Common myeloid progenitor, CD34-positive (primary cell): ENCODE measurements at regions of chr6 and their contacts with region 1.

Region 1: DNA sequence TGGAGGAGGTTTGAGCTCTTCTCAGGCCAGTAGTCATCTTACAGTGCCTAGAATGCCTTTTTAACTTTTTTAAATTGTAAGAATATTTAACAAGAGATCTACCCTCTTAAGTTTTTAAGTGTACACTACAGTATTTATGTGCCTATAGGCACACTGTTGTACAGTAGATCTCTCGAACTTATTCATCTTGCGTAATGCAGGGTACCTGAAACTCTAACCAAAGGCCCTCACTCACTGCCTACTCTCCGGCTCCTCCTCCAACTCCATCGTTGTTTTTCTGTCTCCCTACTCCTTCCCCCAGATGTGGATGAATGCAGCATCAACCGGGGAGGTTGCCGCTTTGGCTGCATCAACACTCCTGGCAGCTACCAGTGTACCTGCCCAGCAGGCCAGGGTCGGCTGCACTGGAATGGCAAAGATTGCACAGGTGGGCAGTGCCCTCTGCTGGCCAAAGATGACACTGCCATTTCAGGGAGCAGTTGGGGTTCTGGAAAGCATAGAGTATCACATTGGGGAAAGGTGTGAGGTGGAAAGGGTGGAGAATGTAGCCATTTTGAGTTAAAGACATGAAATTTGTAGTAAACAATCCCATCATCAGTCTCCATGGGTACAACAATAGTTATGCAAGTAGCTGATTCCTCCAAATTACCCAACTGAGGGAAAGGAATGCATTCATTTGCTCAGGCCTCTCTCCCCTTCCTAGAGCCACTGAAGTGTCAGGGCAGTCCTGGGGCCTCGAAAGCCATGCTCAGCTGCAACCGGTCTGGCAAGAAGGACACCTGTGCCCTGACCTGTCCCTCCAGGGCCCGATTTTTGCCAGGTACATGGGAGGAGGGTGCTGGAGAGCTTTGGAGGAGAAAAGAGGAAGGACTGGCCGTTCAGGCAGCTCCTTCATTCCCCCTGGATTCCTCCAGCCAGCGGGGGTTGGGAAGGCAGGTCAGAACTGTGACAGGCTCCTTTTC is 18.4 kb upstream of the ZNF76 start:
- DNase-seq: peak; percentile 61 to 73 (median 65)
- H3K4me3 ChIP-seq: no peak overlapping the region
- H3K27ac ChIP-seq: no peak overlapping the region
- H3K4me1 ChIP-seq: peaks cover 4 to 28% (median 25%) of the 10 kb centered on the region in 4 experiments
- H3K27me3 ChIP-seq: no peaks in the 10 kb centered on the region

Region 2: DNA sequence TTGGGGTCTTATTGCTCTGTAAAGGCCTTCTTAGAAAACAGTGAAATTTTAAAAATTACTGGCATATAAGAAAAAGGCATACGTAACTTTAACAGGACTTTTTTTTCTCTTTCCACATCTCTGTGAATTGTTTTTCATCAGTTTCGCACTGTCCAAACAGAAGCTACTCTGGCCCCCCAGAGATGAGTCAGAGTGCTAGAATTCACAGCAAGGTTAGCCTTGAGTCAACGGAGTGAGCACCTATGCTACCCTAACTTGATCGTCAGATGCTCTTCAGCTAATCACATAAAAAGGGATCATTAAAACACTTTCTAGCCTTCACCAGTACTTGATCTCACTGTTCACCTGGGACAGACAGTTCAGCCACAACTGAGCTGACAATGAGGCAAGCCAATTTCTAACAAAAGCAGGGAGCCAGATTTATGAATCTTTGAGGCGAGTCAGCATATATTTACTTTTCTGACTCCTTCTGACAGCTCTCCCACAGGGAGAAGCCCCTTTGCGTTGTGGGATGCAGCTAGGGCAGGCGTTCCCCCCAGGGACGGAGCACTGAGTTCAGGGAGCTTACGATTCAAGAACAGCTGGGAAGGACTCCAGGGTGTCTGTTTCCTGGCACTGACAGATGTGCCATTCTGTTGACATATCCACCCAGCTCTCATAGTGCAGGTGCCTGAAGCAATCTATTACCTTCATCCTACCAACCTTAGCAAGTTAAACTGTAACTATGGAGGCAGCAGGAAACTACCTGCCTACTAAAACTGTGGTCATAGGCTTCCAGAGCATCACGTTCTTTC is 638.6 kb before region 1 on chr6:
- CTCF ChIA-PET with region 1: no interaction called
- POLR2A ChIA-PET with region 1: no interaction called
- DNase-seq: no peak
- H3K4me3 ChIP-seq: no peak overlapping the region
- H3K27ac ChIP-seq: no peak overlapping the region
- H3K4me1 ChIP-seq: no peaks in the 10 kb centered on the region
- H3K27me3 ChIP-seq: no peaks in the 10 kb centered on the region

Region 3: DNA sequence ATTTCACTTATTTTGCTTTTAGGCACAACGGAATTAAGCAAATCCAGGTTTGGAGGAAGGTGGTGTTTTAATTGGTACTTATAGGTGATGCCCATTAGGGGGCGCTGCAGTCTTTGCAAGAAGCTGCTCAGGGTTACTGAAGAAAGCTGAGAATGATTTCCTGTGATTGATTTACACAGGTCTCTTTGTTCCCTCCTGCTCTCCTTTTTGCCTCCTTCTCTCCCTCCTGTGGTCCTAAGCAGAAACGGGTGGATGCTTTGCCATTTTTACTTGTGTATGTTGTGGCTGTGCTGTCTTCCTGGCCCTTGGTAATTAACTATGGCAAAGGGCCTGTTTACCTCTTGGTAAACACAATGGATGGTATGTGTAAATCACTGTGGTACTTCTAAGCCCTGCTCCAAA is 254.3 kb before region 1 on chr6:
- CTCF ChIA-PET with region 1: interaction called, 68 read pairs
- POLR2A ChIA-PET with region 1: no interaction called
- DNase-seq: peak; percentile 76 to 89 (median 88)
- H3K4me3 ChIP-seq: no peak overlapping the region
- H3K27ac ChIP-seq: no peak overlapping the region
- H3K4me1 ChIP-seq: peaks cover 0 to 6% (median 5%) of the 10 kb centered on the region in 4 experiments
- H3K27me3 ChIP-seq: no peaks in the 10 kb centered on the region

Region 4: DNA sequence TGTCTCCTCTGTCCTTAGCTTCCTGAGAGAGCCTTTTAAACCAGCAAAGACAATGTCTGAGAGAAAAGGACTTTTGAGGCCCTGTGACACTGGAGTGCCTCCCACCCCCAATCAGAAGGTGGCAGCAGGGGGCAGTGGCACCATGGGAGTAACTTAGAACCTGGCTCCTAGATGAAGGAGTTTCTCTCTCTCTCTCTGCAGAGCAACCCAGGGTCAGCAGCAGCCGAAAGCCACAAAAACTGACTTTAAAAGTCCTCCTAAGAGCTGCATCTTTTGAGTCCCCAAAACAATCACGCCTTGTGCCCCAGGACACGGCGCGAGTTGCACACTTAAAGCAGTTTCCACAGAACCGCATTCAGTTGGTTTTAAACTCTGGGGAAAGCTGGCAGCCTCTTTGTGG is 94.7 kb before region 1 on chr6:
- CTCF ChIA-PET with region 1: interaction called, 90 read pairs
- POLR2A ChIA-PET with region 1: no interaction called
- DNase-seq: peak; percentile 49 to 69 (median 64)
- H3K4me3 ChIP-seq: no peak overlapping the region
- H3K27ac ChIP-seq: no peak overlapping the region
- H3K4me1 ChIP-seq: peaks cover 0 to 7% (median 5%) of the 10 kb centered on the region in 4 experiments
- H3K27me3 ChIP-seq: peaks cover 0 to 4% (median 0%) of the 10 kb centered on the region in 5 experiments

Region 5: GRCh38 chr6:35202066-35202546 is 39.0 kb before region 1 on chr6:
- CTCF ChIA-PET with region 1: interaction called, 84 read pairs
- POLR2A ChIA-PET with region 1: no interaction called
- DNase-seq: peak in 2 of 3 donors; percentile 21 to 22
- H3K4me3 ChIP-seq: no peak overlapping the region
- H3K27ac ChIP-seq: no peak overlapping the region
- H3K4me1 ChIP-seq: no peaks in the 10 kb centered on the region
- H3K27me3 ChIP-seq: peaks cover 0 to 13% (median 8%) of the 10 kb centered on the region in 5 experiments

Region 6: DNA sequence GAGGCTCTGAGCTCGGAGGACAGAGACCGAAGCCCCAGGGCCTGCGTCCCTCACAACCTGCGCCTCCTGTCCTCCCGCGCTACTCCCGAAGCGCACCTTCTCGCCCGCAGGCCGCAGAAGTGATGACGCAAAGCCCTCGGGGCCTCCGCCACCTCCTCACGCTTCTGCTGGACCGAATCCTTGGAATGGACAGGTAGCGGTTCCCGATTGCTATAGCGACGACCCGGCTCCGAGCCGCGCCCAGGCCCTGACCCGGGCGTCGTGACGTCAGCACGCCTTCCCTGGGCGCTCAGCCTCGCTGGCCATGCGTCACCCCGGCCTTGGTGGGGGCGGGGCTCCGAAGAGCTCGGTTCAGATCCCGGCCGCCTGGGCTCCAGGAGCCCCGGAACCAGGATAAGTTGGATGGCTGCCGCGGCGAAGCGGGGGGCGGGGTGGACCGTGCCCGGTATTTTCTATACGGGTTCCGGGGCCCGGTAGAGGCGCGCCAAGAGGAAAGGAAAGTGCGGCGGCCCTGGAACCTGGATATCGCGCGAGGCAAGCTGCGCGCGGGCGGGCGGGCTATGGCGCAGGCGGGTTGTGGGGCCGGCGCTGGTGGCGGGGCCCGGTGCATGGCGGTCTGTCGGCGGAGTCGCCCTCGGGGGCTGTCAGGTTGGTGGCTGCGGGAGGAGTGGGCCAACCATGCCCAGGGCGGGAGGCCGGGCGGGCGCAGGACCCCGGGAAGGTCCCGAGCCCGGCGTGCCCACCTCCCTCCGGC is 18.2 kb after region 1 on chr6 and contains the start of gene ZNF76:
- CTCF ChIA-PET with region 1: interaction called, 56 read pairs
- POLR2A ChIA-PET with region 1: interaction called, 3 read pairs
- DNase-seq: peak; percentile 92 to 93 (median 92)
- H3K4me3 ChIP-seq: peak within 1 kb of the TSS; percentile 60 to 98 (median 90)
- H3K27ac ChIP-seq: peak within 1 kb of the TSS; percentile 86 to 92
- H3K4me1 ChIP-seq: peaks cover 11 to 24% (median 19%) of the 10 kb centered on the region in 4 experiments
- H3K27me3 ChIP-seq: no peaks in the 10 kb centered on the region